ENCODE measurements at regions of chr6 and their contacts with region 1.

Region 1: GRCh38 chr6:89829591-89830385 is at the start of gene CASP8AP2:
- DNase-seq: peak; percentile 94
- H3K4me3 ChIP-seq: peak within 1 kb of the TSS; percentile 68 to 95
- H3K27ac ChIP-seq: peak within 1 kb of the TSS; percentile 64 to 67
- H3K4me1 ChIP-seq: peaks cover 0 to 3% of the 10 kb centered on the region in 2 experiments; a peak in 1 of 4 replicates
- H3K27me3 ChIP-seq: no peaks in the 10 kb centered on the region
- CTCF ChIP-seq: no peak
- EP300 ChIP-seq: 0 out of 4 replicates have a peak, but pooled peaks of 1 of the 2 experiments have one; percentile 10
- RAD21 ChIP-seq: no peak
- polyA plus RNA-seq, gene CASP8AP2: 2.8 and 3.2 TPM in 2 replicates

Region 2: GRCh38 chr6:89716532-89716931 is 113.3 kb before region 1 on chr6:
- CTCF ChIA-PET with region 1: no interaction called
- POLR2A ChIA-PET with region 1: no interaction called
- DNase-seq: no peak
- H3K4me3 ChIP-seq: no peak overlapping the region
- H3K27ac ChIP-seq: no peak overlapping the region
- H3K4me1 ChIP-seq: no peaks in the 10 kb centered on the region
- H3K27me3 ChIP-seq: no peaks in the 10 kb centered on the region
- CTCF ChIP-seq: no peak
- EP300 ChIP-seq: no peak
- RAD21 ChIP-seq: no peak

Region 3: GRCh38 chr6:89819336-89820130 is 10.3 kb before region 1 on chr6 and contains the start of gene MDN1:
- CTCF ChIA-PET with region 1: interaction called, 16 read pairs
- POLR2A ChIA-PET with region 1: interaction called, 22 read pairs
- DNase-seq: peak; percentile 94
- H3K4me3 ChIP-seq: peak within 1 kb of the TSS; percentile 80 to 87
- H3K27ac ChIP-seq: peak within 1 kb of the TSS; percentile 64 to 65
- H3K4me1 ChIP-seq: peaks cover 0 to 7% of the 10 kb centered on the region in 2 experiments; a peak in 1 of 4 replicates
- H3K27me3 ChIP-seq: no peaks in the 10 kb centered on the region
- CTCF ChIP-seq: no peak
- EP300 ChIP-seq: no peak
- RAD21 ChIP-seq: no peak
- polyA plus RNA-seq, gene MDN1: 8.5 and 8.9 TPM in 2 replicates

Region 4: GRCh38 chr6:89940225-89941027 is 110.6 kb after region 1 on chr6:
- CTCF ChIA-PET with region 1: no interaction called
- POLR2A ChIA-PET with region 1: no interaction called
- DNase-seq: peak; percentile 83
- H3K4me3 ChIP-seq: no peak overlapping the region; a peak in 1 of 4 replicates
- H3K27ac ChIP-seq: no peak overlapping the region
- H3K4me1 ChIP-seq: no peaks in the 10 kb centered on the region; a peak in 1 of 4 replicates
- H3K27me3 ChIP-seq: no peaks in the 10 kb centered on the region
- CTCF ChIP-seq: peak; percentile 82
- EP300 ChIP-seq: no peak
- RAD21 ChIP-seq: peak; percentile 98